Activated naive CD8-positive, alpha-beta T cell treated with anti-CD3 and anti-CD28 coated beads, Interleukin-2, amount 10 ng/mL, durations not matched to agents 7 days and 5 days (primary cell): ENCODE measurements at regions of chr3 and their contacts with region 1.

Region 1: GRCh38 chr3:44761424-44762169 is at the starts of genes KIAA1143 and KIF15:
- DNase-seq: peak; percentile 97
- ATAC-seq: peak; percentile 97
- H3K4me3 Mint-ChIP-seq: peak within 1 kb of the TSS; percentile 84
- H3K27ac Mint-ChIP-seq: peak within 1 kb of the TSS; percentile 84
- H3K4me1 Mint-ChIP-seq: peaks cover 25% of the 10 kb centered on the region
- H3K27me3 Mint-ChIP-seq: no peaks in the 10 kb centered on the region
- total RNA-seq, gene KIAA1143: 45.3 to 46.4 TPM
- total RNA-seq, gene KIF15: 39.8 to 42.3 TPM

Region 2: DNA sequence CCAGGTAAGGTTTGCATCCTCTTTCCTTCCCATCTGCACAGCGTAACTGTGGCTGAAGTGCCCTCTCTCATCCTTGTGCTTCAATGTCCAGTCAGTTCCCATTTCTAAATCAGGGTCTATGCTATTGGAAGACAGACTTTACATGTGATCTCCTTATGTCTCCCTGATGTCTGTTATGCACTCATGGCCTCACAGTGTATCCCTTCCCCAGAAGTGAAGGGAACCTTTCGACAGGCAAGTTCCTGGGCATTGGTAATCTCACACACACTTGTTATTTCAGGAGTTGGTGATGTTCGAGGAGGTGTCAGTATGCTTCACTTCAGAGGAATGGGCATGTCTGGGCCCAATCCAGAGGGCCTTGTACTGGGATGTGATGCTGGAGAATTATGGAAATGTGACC is 129.4 kb before region 1 on chr3:
- POLR2A ChIA-PET with region 1: no interaction called
- DNase-seq: no peak
- ATAC-seq: no peak
- H3K4me3 Mint-ChIP-seq: no peak overlapping the region
- H3K27ac Mint-ChIP-seq: peak overlapping the region; percentile 2
- H3K4me1 Mint-ChIP-seq: peaks cover 11% of the 10 kb centered on the region
- H3K27me3 Mint-ChIP-seq: no peaks in the 10 kb centered on the region

Region 3: DNA sequence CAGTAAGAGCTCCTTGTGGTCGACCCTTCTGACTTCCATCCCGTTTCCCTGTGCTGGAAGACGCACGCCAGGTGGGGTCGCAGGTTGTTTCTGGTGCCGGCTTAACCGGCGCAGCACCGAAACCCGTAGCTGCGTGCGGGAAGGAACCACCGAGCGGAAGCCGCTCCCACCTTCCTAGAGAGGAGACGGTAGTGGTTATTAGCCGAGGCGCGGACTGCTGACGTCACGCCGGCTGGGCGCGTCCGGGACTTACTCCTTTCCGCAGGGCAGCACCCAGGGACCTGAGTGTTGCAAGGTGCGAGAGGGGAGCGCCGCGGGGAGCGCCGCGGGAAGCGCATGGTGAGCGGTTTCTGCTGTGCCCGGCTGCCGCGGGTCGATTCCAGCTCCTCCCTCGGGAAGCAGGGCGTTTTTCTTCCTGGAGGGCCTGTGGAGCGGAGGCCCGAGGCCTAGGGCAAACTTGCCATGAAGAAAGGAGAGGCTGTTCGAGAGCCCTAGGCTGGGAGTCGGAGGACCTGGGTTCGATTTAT is 32.1 kb before region 1 on chr3 and contains the start of gene ZNF501:
- POLR2A ChIA-PET with region 1: interaction called, 22 read pairs
- DNase-seq: peak; percentile 86
- ATAC-seq: peak; percentile 98
- H3K4me3 Mint-ChIP-seq: peak within 1 kb of the TSS; percentile 90
- H3K27ac Mint-ChIP-seq: peak within 1 kb of the TSS; percentile 90
- H3K4me1 Mint-ChIP-seq: peaks cover 5% of the 10 kb centered on the region
- H3K27me3 Mint-ChIP-seq: no peaks in the 10 kb centered on the region
- total RNA-seq, gene ZNF501: 4.3 to 6.3 TPM

Region 4: DNA sequence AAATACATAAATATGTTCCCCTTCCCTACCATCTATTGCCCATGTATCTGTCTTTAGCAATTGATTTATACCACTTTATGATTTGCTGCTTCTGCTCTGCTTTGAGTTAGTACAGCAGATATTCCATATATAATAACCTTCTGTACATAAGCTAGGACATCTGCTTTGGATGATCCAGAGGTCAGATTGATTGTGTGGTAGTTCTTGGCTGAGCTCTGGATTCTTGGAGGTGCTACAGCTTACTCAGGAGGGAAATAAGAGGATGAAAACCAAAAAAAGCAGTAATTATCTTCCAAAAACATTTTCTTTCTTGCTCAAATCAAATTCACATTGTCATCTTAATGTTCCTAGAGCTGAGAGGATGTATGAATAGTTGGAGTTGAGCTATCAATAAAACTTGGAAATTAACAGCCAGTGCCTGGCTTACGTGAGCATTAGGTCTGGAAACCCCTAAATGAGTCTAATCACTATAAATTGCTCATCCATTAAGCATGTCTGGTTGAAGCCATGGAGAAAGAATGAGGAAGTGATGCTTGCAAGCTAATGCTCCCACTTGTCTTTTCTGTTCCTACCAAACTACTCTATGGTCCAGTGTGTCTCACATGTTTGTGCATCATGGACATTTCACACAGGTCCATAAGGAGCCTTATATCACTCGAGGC is 63.8 kb after region 1 on chr3:
- POLR2A ChIA-PET with region 1: no interaction called
- DNase-seq: no peak
- ATAC-seq: no peak
- H3K4me3 Mint-ChIP-seq: no peak overlapping the region
- H3K27ac Mint-ChIP-seq: no peak overlapping the region
- H3K4me1 Mint-ChIP-seq: no peaks in the 10 kb centered on the region
- H3K27me3 Mint-ChIP-seq: no peaks in the 10 kb centered on the region

Region 5: DNA sequence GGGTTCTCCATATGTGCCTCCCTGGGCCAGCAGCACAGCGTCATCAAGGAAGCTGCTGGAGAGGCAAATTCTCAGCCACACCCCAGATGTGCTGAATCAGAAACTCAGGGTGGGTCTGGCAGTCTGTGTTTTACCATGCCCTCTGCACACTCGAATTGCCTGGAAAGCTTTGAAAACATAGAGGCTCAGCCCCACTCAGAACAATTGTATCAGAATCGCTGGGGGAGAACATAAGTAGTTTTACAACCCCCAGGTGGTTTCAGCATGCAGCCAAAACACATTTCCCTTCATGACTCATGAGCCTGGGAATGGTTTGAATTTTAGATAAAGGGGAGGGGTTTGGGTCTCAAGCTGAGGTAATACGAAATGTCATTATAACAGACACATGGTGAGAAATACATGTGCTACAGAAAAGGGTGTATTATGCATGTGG is 122.4 kb after region 1 on chr3:
- POLR2A ChIA-PET with region 1: no interaction called
- DNase-seq: no peak
- ATAC-seq: no peak
- H3K4me3 Mint-ChIP-seq: no peak overlapping the region
- H3K27ac Mint-ChIP-seq: no peak overlapping the region
- H3K4me1 Mint-ChIP-seq: no peaks in the 10 kb centered on the region
- H3K27me3 Mint-ChIP-seq: peaks cover 20% of the 10 kb centered on the region